Activated naive CD4-positive, alpha-beta T cell treated with anti-CD3 and anti-CD28 coated beads, Interleukin-2, amount 10 ng/mL, durations not matched to agents 7 days and 5 days (primary cell): ENCODE measurements at regions of chr5 and their contacts with region 1.

Region 1: DNA sequence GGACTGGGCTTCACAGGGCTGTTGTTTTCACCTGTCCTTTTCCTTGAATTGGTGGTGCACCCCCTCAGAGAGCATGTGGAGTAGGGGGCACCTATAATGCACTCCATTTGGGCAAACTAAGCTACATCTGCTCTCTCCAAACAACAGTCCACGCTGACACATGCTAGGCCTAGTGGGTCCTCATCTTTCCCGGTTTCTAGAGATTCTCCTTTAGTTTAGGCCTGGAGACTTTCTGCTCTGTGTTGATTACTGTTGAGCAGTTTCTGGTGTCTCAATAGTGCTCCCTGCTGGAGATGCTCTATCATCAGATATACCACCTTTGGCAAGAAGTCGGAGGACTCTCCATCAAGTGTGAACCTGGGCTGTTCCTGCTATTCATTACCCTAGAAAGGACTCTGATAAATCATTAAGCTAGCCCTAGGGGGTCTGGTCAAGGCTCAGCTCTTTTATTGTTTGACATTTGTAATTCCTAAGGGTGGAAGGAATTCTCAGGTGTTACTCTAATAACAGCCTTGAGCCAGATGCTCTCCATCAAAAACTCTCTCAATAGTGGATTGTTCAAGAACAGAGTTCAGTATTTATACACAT is 64.0 kb upstream of the FYB1 start:
- DNase-seq: peak; percentile 70
- H3K4me3 Mint-ChIP-seq: no peak overlapping the region
- H3K27ac Mint-ChIP-seq: no peak overlapping the region
- H3K4me1 Mint-ChIP-seq: peaks cover 38% of the 10 kb centered on the region
- H3K27me3 Mint-ChIP-seq: peaks cover 11% of the 10 kb centered on the region

Region 2: GRCh38 chr5:38615981-38616451 is 667.3 kb before region 1 on chr5:
- CTCF ChIA-PET with region 1: no interaction called
- DNase-seq: no peak
- H3K4me3 Mint-ChIP-seq: no peak overlapping the region
- H3K27ac Mint-ChIP-seq: no peak overlapping the region
- H3K4me1 Mint-ChIP-seq: no peaks in the 10 kb centered on the region
- H3K27me3 Mint-ChIP-seq: no peaks in the 10 kb centered on the region

Region 3: DNA sequence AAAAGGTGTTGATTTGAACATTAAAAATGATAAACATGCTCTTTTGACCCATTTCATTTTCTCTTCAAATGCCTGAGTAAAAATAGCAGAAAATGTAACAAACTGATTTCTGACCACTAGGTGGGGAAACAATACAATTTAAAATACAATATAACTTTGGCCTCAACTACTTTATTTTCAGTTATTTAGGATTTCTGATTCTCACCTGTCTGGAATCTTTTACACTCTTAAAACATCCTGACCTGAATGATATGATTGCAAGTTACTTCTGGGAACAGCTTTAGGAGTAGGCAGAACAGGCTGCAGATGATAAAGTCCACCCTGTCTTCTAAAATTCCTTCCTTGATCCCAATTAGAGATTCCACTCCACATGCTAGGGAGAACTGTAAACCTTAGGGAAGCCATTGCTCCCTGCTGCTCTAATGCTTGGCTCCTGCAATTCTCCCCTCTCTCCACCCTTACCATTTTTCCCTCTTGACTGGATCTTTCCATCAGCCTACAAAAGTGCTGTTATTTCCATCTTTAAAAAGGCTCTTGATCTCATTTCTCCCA is 134.3 kb before region 1 on chr5:
- CTCF ChIA-PET with region 1: interaction called, 10 read pairs
- DNase-seq: no peak
- H3K4me3 Mint-ChIP-seq: no peak overlapping the region
- H3K27ac Mint-ChIP-seq: peak overlapping the region; percentile 26
- H3K4me1 Mint-ChIP-seq: peaks cover 53% of the 10 kb centered on the region
- H3K27me3 Mint-ChIP-seq: no peaks in the 10 kb centered on the region

Region 4: DNA sequence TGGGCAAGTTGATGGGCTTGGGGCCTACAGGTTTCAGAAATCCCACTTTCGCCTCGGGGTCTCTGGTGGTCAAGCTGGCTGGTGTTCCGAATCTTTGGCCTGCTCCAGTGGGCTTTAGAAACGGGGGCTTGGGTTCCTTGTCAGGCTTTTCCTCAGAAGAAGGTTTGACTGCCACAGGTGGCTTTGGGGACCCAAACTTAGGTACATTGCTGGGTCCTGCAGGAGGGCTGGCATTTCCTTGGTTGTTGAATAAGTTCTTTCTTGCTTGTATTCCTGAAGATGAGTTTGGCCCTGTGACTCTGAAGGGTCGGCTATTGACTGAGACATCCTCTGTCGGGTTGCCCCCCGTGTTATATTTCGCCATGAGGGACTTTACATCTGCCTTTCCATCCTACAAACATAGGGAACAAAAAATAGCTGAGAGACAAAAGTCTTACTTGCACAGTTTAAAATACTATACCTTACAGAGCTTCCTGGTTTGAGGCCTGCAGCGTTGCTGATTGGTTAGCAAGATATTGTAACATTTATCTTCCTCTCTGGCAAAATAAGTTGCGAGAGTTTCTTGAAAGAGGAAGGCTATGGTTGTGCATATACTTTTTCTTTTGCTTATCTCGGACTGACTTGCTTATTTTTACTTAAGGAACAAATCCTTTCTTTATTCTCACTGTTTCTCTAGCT is 80.6 kb before region 1 on chr5:
- CTCF ChIA-PET with region 1: interaction called, 15 read pairs
- DNase-seq: peak; percentile 66
- H3K4me3 Mint-ChIP-seq: peak overlapping the region; percentile 88
- H3K27ac Mint-ChIP-seq: peak overlapping the region; percentile 94
- H3K4me1 Mint-ChIP-seq: peaks cover 41% of the 10 kb centered on the region
- H3K27me3 Mint-ChIP-seq: no peaks in the 10 kb centered on the region

Region 5: GRCh38 chr5:39231705-39232525 is 51.4 kb before region 1 on chr5:
- CTCF ChIA-PET with region 1: interaction called, 13 read pairs
- DNase-seq: no peak
- H3K4me3 Mint-ChIP-seq: no peak overlapping the region
- H3K27ac Mint-ChIP-seq: peak overlapping the region; percentile 37
- H3K4me1 Mint-ChIP-seq: peaks cover 14% of the 10 kb centered on the region
- H3K27me3 Mint-ChIP-seq: no peaks in the 10 kb centered on the region

Region 6: DNA sequence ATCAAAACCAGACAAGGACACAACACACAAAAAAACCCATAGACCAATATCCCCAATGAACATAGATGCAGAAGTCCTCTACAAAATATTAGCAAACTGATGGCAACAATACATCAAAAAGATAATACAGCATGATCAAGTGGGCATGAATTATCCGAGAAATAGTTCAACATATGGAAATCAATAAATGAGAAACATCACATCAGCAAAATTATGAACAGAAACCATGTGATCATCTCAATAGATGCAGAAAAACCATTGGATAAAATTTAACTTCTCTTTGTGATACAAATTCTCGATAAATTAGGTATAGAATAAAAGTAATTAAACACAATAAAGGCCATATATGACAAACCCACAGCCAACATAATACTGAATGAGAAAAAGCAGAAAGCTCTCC is 11.4 kb after region 1 on chr5:
- CTCF ChIA-PET with region 1: no interaction called
- DNase-seq: no peak
- H3K4me3 Mint-ChIP-seq: no peak overlapping the region
- H3K27ac Mint-ChIP-seq: no peak overlapping the region
- H3K4me1 Mint-ChIP-seq: no peaks in the 10 kb centered on the region
- H3K27me3 Mint-ChIP-seq: peaks cover 18% of the 10 kb centered on the region